Heart right ventricle (tissue), 16 donors: ENCODE measurements at regions of chr7 and their contacts with region 1.

Region 1: DNA sequence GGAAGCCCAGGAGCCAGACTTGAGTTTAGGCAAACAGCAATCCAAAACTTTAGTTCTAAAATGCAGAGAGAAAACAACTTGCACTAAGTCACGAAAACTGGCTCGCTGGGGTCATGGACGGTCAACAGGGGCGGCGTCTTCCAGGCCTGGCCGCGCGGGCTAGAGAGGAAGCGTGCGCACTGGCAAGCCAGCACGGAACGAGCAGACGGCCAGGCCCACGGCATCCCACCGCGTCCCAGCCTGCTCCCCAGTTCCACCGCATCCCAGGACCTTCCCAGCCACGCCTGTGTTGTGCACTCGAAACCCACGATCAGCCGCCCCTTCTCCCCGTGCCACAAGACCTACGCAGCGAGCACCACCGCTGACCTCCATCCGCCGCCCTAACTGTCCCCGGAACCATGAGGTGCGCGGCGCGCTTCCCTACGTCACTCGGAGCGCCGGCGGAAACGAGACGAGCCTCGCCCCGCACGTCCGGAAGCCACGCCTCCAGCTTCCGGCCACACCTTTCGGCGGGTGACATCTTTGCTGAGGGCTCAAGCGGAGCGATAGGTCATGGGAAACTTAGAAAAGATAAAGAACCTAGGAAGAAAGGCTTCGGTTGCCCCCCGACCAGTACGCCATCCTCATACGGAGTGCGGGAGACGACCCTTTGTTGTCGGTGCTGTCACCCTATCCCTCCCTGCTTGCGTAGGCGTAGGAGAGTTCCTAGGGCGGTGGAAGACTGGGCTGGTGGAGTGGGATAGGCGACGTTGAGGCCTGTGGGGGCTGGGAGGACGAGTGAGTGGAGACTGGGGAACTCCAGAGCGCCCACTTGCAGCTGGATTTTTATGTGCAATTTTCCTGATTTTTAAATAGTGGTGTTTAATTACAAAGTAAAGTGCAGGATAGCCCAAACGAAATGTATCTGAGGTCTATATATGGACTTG is at the start of gene TBRG4:
- DNase-seq: peak; percentile 95
- ATAC-seq: peak; percentile 99 to 100 (median 99)
- H3K4me3 ChIP-seq: peak within 1 kb of the TSS; percentile 57 to 89 (median 73)
- H3K27ac ChIP-seq: peak within 1 kb of the TSS; percentile 80 to 99 (median 94)
- H3K4me1 ChIP-seq: peaks cover 11 to 55% (median 43%) of the 10 kb centered on the region in 9 donors
- H3K27me3 ChIP-seq: no peaks in the 10 kb centered on the region
- CTCF ChIP-seq: peak in 7 of 9 donors; percentile 9 to 65 (median 50)
- total RNA-seq, gene TBRG4: 57.1 to 88.2 (median 66.7) TPM

Region 2: DNA sequence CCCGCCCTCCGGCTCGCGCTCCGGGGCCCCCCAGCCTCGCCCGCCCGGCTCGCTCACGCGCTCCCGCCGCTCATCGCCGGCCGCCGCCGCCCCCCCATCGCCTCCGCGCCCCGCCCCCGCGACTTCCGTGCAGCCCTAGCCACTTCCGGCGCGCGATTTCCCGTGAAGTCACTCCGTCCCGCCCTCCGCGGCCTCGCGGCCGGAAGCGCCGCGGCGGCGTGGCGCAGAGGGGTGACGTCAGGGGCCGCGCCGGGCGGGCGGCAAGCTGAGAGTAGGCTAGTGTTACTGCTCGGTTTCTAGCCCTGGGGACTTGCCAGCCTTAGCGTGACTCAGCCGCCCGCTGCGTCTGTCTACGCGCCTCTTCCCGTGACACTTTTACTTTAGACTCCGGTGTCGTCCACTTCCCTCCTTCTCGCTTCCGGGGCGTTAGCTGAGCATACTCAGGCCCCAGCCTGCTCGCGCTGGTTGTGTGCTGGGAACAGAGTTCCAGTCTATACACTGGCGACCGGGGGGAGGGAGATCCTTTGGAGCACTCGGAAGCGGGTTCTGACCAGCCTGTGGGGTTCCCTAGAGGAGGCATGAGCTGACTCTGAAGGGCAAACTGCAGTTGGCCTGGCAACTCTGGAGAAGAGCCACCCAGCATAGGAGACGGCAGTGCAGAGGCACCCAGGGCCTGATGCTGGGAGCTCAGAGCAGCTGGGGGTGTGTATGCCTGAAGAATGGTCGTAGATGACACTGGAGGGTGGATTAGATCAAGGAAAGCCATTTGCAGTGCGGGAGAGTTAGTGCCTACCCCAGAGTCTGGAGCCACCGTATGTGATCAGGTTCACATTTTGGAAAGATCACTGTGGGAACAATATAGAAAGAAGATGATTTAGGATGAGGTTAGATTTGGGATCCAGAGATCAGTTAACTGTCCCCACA is 225.9 kb before region 1 on chr7 and contains the start of gene PURB:
- intact Hi-C with region 1: loop called in 1 of 10 experiments (anchors 10 kb)
- DNase-seq: peak; percentile 93 to 96
- ATAC-seq: peak; percentile 97 to 99 (median 98)
- H3K4me3 ChIP-seq: peak within 1 kb of the TSS; percentile 63 to 97 (median 90)
- H3K27ac ChIP-seq: peak within 1 kb of the TSS; percentile 80 to 98 (median 97)
- H3K4me1 ChIP-seq: peaks cover 9 to 53% (median 45%) of the 10 kb centered on the region in 9 donors
- H3K27me3 ChIP-seq: no peaks in the 10 kb centered on the region
- CTCF ChIP-seq: no peak
- total RNA-seq, gene PURB: 12.7 to 18.7 (median 16.7) TPM

Region 3: DNA sequence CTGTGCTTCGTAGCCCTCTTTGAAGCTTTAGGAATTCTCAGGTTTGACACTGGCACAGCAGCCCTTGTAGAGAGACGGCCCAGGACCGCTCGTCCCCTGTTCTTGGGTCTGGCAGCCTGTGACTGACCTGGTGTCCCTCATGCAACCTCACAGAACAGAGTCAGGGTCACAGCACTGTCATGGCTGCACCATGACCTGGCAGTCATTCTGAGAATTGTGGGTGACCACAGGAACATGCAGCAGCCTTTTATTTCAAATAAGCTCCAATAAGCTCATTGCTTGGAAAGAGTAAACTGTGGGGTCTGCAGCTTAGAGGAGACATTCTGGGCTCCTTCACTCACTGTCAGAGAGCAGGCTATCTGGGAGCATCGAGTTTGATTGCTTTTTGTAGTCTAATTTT is 175.2 kb before region 1 on chr7:
- intact Hi-C with region 1: no loop called
- DNase-seq: no peak
- ATAC-seq: no peak
- H3K4me3 ChIP-seq: no peak overlapping the region
- H3K27ac ChIP-seq: no peak overlapping the region
- H3K4me1 ChIP-seq: no peaks in the 10 kb centered on the region
- H3K27me3 ChIP-seq: peaks cover 0 to 4% (median 0%) of the 10 kb centered on the region in 7 donors
- CTCF ChIP-seq: no peak

Region 4: GRCh38 chr7:44973610-44974401 is 137.8 kb before region 1 on chr7:
- intact Hi-C with region 1: loop called in 1 of 10 experiments (anchors 5 kb)
- DNase-seq: peak in 1 of 2 donors; percentile 57
- ATAC-seq: peak in 6 of 8 donors; percentile 39 to 72 (median 56)
- H3K4me3 ChIP-seq: no peak overlapping the region
- H3K27ac ChIP-seq: no peak overlapping the region
- H3K4me1 ChIP-seq: peaks cover 0 to 34% (median 0%) of the 10 kb centered on the region in 9 donors
- H3K27me3 ChIP-seq: no peaks in the 10 kb centered on the region
- CTCF ChIP-seq: peak; percentile 43 to 72 (median 61)

Region 5: GRCh38 chr7:44986218-44987053 is 125.1 kb before region 1 on chr7:
- intact Hi-C with region 1: loop called in 5 of 10 experiments (anchors 5 kb)
- DNase-seq: peak; percentile 93 to 96
- ATAC-seq: peak; percentile 98 to 99 (median 99)
- H3K4me3 ChIP-seq: peak overlapping the region; percentile 6 to 71 (median 62)
- H3K27ac ChIP-seq: peak overlapping the region; percentile 89 to 98 (median 96)
- H3K4me1 ChIP-seq: peaks cover 0 to 56% (median 30%) of the 10 kb centered on the region in 9 donors
- H3K27me3 ChIP-seq: no peaks in the 10 kb centered on the region
- CTCF ChIP-seq: no peak

Region 6: DNA sequence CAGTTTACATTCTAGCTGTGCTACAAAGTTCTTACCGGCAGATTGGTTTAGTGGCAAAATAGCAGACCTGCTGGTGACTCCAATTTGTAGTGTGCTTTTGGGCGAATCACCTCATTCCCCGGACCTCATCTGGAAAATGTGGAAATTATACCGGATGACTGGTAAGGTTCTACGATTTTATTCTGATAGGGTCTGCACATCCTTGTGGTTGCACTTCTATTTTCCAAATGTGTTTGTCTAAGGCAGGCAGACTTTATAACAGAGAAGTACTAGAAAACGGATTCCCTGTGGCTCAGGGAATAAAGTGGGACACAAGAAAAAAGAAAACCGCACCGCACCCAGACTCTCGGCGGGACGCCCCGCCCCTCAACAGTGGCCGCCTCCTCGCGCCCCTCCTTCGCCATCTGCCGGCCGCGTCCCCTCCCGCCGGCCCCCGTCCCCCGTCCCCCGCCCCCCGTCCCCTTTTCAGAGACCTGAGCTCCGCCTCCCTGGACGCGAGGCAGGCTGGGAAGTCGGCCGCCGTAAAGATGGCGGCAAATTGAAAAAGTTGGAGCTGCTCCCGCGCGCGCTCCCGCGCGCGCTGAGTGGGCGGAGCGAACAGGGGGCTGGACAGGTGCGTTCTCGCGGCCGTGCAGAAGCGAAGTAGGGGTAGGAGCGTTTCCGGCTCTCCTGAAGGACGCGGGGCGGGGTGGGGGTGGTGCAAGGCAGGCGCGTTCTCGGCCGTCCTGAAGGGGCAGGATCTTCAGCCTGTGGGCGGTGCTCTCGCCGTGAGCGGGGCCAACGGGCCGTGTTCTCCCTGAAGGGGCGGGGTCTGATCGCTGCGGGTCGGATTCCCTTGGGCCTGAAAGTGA is 112.1 kb before region 1 on chr7:
- intact Hi-C with region 1: loop called in 3 of 10 experiments (anchors 5 kb)
- DNase-seq: peak; percentile 99 to 100
- ATAC-seq: peak; percentile 95 to 98 (median 97)
- H3K4me3 ChIP-seq: peak overlapping the region; percentile 27 to 82 (median 68)
- H3K27ac ChIP-seq: peak overlapping the region; percentile 14 to 96 (median 92)
- H3K4me1 ChIP-seq: peaks cover 0 to 48% (median 20%) of the 10 kb centered on the region in 9 donors
- H3K27me3 ChIP-seq: no peaks in the 10 kb centered on the region
- CTCF ChIP-seq: peak in 6 of 9 donors; percentile 6 to 42 (median 20)